ENCODE measurements at regions of chr5 and their contacts with region 1.

Region 1: DNA sequence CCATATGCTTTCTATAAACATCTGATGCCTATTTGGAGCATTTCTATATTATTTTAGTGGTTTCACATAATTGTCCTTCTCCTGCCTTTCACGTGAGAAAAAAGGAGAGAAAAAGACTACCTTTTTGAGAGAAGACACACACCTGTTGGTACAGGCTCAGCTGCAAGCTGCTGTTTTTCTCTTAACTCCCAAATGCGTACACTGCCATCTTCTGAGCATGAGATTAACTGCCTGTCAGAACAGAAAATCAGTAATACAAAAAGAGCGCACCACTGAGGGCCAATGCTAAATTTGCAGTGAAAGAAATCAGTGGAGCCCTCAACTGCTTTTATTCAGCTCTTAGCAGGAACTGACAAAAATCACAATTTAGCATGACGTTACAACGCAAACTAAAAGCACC is 54.9 kb downstream of the WDR41 start:
- DNase-seq: peak; percentile 25
- H3K4me3 ChIP-seq: no peak overlapping the region
- H3K27ac ChIP-seq: no peak overlapping the region
- H3K4me1 ChIP-seq: no peaks in the 10 kb centered on the region
- H3K27me3 ChIP-seq: no peaks in the 10 kb centered on the region
- CTCF ChIP-seq: no peak; the same call in 1 of the 2 replicates
- EP300 ChIP-seq: no peak
- RAD21 ChIP-seq: peak; percentile 79

Region 2: DNA sequence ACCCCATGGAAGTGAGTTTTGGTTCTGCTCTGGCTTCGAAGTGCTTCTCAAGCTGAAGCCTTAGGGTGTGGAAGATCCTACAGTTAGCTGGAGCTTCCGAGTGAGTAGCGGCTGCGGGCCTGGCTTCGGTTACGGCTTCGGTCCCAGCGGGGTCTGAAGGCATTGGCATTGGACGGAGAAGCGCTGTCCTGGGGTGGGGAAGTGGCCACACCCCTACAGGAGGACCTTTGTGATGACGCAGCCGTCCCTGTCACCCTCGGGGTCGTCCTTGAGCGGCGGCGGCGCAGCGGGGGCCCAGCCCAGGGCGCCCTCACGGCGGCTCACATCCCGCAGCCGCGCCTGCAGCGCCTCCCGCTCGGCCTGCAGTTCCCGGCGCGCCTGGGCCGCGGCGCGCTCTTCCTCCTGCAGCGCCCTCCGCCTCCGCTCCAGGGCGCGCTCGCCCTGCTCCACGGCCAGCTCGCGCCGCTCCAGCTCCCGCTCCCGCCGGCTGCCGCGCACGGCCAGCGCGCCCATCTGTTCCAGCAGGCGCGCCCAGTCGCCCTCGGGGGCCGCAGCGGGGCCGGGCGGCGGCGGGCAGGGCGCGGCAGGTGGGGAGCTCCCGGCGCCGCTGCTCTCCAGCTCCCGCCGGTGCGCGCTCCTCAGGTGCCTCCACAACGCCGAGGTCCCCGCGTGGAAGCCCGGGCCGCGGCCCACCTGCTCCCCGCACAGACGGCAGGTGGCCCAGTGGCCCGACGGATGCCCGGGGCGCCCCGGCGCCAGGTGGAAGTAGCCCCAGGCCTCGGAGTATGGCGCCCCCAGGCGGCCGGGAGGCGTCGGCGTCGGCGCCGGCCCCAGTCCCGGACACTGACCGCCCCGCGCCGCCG is 360.0 kb before region 1 on chr5:
- CTCF ChIA-PET with region 1: interaction called, 10 read pairs
- POLR2A ChIA-PET with region 1: no interaction called
- DNase-seq: peak; percentile 94
- H3K4me3 ChIP-seq: peak overlapping the region; percentile 52 to 53; a peak in 3 of 4 replicates
- H3K27ac ChIP-seq: no peak overlapping the region; a peak in 1 of 4 replicates
- H3K4me1 ChIP-seq: peaks cover 0 to 4% of the 10 kb centered on the region in 2 experiments; a peak in 2 of 4 replicates
- H3K27me3 ChIP-seq: no peaks in the 10 kb centered on the region
- CTCF ChIP-seq: peak; percentile 62
- EP300 ChIP-seq: no peak
- RAD21 ChIP-seq: peak; percentile 32; the same call in 1 of the 2 replicates

Region 3: GRCh38 chr5:77143998-77144836 is 293.0 kb before region 1 on chr5:
- CTCF ChIA-PET with region 1: interaction called, 38 read pairs
- POLR2A ChIA-PET with region 1: no interaction called
- DNase-seq: peak; percentile 64
- H3K4me3 ChIP-seq: no peak overlapping the region; a peak in 1 of 4 replicates
- H3K27ac ChIP-seq: no peak overlapping the region
- H3K4me1 ChIP-seq: no peaks in the 10 kb centered on the region
- H3K27me3 ChIP-seq: peaks cover 7% of the 10 kb centered on the region
- CTCF ChIP-seq: peak; percentile 85
- EP300 ChIP-seq: no peak
- RAD21 ChIP-seq: peak; percentile 95

Region 4: DNA sequence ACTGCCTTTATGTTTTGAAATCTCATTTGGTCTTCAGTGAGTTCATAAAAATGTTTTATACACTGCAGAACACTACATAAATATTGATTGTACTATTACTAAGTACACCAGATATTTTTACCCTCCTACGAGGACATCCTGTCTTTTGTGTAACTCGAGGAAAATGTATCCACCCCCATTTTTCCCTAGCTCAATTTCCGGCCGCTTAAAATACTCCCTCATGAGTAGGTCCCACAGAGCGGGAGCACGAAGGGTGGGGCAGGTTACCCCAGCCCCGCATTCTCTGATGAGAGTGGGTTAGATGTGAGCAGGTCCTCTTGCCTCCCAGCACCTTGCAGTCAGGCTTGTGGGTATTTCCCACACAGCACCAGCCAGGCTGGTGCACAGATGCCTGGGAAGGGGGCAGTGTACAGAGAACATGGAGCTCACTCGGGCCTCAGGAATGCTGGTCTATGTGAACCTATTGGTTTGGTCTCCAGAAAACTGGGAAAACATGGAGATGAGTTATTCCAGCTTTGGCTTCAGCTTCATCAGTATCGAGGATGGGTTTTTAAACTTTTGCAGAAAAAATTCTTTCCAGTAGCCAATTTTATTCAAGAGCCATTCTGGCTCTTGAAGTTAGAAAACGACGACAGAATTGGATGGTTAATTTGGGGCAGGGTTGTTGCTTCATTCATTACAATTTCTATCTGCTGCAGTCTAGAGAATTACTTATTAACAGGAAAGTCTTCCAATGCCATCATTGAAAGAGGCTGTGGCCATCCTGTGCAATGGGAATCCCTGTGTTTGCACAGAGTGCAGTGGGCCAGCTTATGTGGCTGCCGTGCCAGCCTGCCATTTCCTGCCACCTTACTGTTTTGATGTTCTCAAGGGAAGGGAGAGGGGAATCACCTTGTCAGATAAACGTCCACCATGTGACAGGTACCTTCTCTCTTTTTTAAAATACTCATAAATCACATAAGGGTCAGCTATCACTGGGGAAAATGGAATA is 18.3 kb before region 1 on chr5:
- CTCF ChIA-PET with region 1: interaction called, 19 read pairs
- POLR2A ChIA-PET with region 1: no interaction called
- DNase-seq: no peak
- H3K4me3 ChIP-seq: no peak overlapping the region
- H3K27ac ChIP-seq: no peak overlapping the region
- H3K4me1 ChIP-seq: peaks cover 0 to 13% of the 10 kb centered on the region in 2 experiments; a peak in 1 of 4 replicates
- H3K27me3 ChIP-seq: no peaks in the 10 kb centered on the region
- CTCF ChIP-seq: no peak
- EP300 ChIP-seq: no peak
- RAD21 ChIP-seq: no peak

Region 5: GRCh38 chr5:77491783-77492652 is 54.8 kb after region 1 on chr5 and contains the start of gene WDR41:
- CTCF ChIA-PET with region 1: interaction called, 26 read pairs
- POLR2A ChIA-PET with region 1: no interaction called
- DNase-seq: peak; percentile 96
- H3K4me3 ChIP-seq: peak within 1 kb of the TSS; percentile 93 to 96
- H3K27ac ChIP-seq: peak within 1 kb of the TSS; percentile 90 to 95
- H3K4me1 ChIP-seq: peaks cover 5 to 7% of the 10 kb centered on the region in 2 experiments; a peak in 2 of 4 replicates
- H3K27me3 ChIP-seq: no peaks in the 10 kb centered on the region
- CTCF ChIP-seq: peak; percentile 81
- EP300 ChIP-seq: no peak
- RAD21 ChIP-seq: peak; percentile 67
- polyA plus RNA-seq, gene WDR41: 17.2 and 18.7 TPM in 2 replicates

Measured in SK-N-SH (cell line).